Left ventricle myocardium superior (tissue), 1 donor: ENCODE measurements at regions of chr22 and their contacts with region 1.

Region 1: GRCh38 chr22:45553351-45554039 is 50.8 kb downstream of the FBLN1 start:
- DNase-seq: peak; percentile 87
- ATAC-seq: peak; percentile 57

Region 2: GRCh38 chr22:45268958-45269844 is 284.3 kb before region 1 on chr22:
- intact Hi-C with region 1: loop called (anchors 10 kb)
- DNase-seq: peak; percentile 95
- ATAC-seq: peak; percentile 78

Region 3: GRCh38 chr22:45717789-45718188 is 164.3 kb after region 1 on chr22:
- intact Hi-C with region 1: no loop called
- DNase-seq: no peak
- ATAC-seq: no peak